ENCODE measurements at regions of chr6 and their contacts with region 1.

Region 1: DNA sequence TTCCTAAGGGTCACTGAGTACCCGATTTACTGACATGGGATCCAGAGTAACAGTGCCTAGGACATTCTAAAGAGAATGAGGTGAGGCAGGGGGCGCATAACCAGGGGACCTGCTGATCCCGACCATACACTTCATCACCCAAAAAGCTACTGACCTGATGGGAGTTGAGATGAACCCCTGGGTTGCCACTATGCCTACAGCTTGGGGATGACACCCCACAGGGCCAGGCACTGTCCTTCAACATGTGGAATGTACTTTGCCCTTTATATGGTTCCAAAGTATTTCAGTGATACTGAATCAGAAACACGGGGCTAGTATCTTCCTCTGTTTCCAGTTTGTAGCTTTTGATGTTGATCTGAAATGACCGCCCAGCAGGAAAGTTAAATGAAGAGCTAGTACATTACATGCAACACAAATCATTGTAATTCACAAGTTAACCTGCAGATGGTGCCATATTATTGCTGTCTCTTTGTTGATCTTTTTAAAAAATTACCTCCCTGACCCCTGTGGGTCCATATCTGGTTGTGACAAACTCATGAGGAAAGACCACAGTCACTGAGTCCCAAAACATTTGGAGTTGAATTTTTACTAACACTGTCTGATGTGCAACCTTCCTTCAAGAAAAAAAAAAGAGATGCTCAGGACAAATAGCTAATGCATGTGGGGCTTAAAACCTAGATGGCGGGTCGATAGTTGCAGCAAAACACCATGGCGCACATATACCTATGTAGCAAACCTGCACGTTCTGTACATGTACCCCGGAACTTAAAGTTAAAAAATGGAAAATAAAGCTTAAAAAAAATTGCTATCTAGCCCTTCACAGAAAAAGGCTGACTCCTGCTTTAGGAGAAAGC is 42.7 kb upstream of the GCNT2 start:
- DNase-seq: peak; percentile 39 to 54
- ATAC-seq: peak; percentile 50 to 76
- H3K4me3 ChIP-seq: no peak overlapping the region
- H3K27ac ChIP-seq: peak overlapping the region in 1 of 2 experiments; percentile 59; a peak in 1 of 6 replicates
- H3K4me1 ChIP-seq: peaks cover 10% of the 10 kb centered on the region; the same call in 2 of the 3 replicates
- CTCF ChIP-seq: peak; percentile 66
- EP300 ChIP-seq: no peak
- POLR2A ChIP-seq: no peak
- RAD21 ChIP-seq: peak; percentile 69 to 75

Region 2: GRCh38 chr6:10465629-10466504 is 12.5 kb before region 1 on chr6:
- CTCF ChIA-PET with region 1: interaction called, 22 read pairs
- POLR2A ChIA-PET with region 1: no interaction called
- DNase-seq: peak; percentile 33 to 72
- ATAC-seq: peak; percentile 73 to 85; a peak in 5 of 6 replicates
- H3K4me3 ChIP-seq: no peak overlapping the region
- H3K27ac ChIP-seq: peak overlapping the region; percentile 70 to 81
- H3K4me1 ChIP-seq: peaks cover 27% of the 10 kb centered on the region
- CTCF ChIP-seq: peak; percentile 63
- EP300 ChIP-seq: no peak
- POLR2A ChIP-seq: no peak; the same call in 1 of the 2 replicates
- RAD21 ChIP-seq: peak; percentile 57 to 67

Region 3: GRCh38 chr6:10491463-10491862 is 13.0 kb after region 1 on chr6:
- CTCF ChIA-PET with region 1: interaction called, 17 read pairs
- POLR2A ChIA-PET with region 1: no interaction called
- DNase-seq: no peak
- ATAC-seq: no peak
- H3K4me3 ChIP-seq: no peak overlapping the region
- H3K27ac ChIP-seq: no peak overlapping the region
- H3K4me1 ChIP-seq: no peaks in the 10 kb centered on the region
- CTCF ChIP-seq: no peak
- EP300 ChIP-seq: no peak
- POLR2A ChIP-seq: no peak
- RAD21 ChIP-seq: no peak

Region 4: GRCh38 chr6:10510592-10511367 is 32.4 kb after region 1 on chr6:
- CTCF ChIA-PET with region 1: interaction called, 14 read pairs
- POLR2A ChIA-PET with region 1: no interaction called
- DNase-seq: peak; percentile 62 to 63
- ATAC-seq: peak; percentile 98 to 99
- H3K4me3 ChIP-seq: peak overlapping the region; percentile 22; the same call in 1 of the 3 replicates
- H3K27ac ChIP-seq: peak overlapping the region; percentile 51 to 74
- H3K4me1 ChIP-seq: peaks cover 27% of the 10 kb centered on the region
- CTCF ChIP-seq: peak; percentile 70
- EP300 ChIP-seq: no peak
- POLR2A ChIP-seq: no peak
- RAD21 ChIP-seq: peak; percentile 84 to 89

Region 5: GRCh38 chr6:10800829-10801535 is 322.6 kb after region 1 on chr6:
- CTCF ChIA-PET with region 1: interaction called, 27 read pairs
- POLR2A ChIA-PET with region 1: no interaction called
- DNase-seq: peak; percentile 56 to 60
- ATAC-seq: peak; percentile 99
- H3K4me3 ChIP-seq: no peak overlapping the region
- H3K27ac ChIP-seq: peak overlapping the region in 1 of 2 experiments; percentile 55; a peak in 2 of 6 replicates
- H3K4me1 ChIP-seq: peaks cover 7% of the 10 kb centered on the region; the same call in 2 of the 3 replicates
- CTCF ChIP-seq: peak; percentile 90
- EP300 ChIP-seq: no peak
- POLR2A ChIP-seq: no peak
- RAD21 ChIP-seq: peak; percentile 82 to 88

Region 6: DNA sequence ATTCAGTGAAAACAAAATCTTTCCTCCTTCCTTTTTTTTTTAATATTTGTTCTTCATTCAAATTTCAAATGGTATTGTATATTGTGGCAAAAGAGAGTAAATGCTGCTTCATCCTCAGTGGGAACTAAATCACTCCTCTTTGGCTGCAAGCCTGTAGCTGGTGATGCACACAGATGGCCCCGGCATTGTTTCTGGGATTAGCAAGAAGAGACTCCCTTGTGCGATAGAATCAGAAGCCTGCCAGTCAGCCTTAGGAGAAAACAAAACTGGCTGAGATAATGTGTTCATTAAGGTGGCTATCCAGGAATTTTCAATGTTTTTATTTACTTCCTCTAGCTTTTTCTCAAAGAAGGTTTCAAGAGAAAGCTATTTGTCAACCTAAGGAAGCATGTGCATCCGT is 586.4 kb after region 1 on chr6:
- CTCF ChIA-PET with region 1: interaction called, 10 read pairs
- POLR2A ChIA-PET with region 1: no interaction called
- DNase-seq: no peak
- ATAC-seq: no peak
- H3K4me3 ChIP-seq: no peak overlapping the region
- H3K27ac ChIP-seq: no peak overlapping the region
- H3K4me1 ChIP-seq: peaks cover 3% of the 10 kb centered on the region; the same call in 1 of the 3 replicates
- CTCF ChIP-seq: no peak
- EP300 ChIP-seq: no peak
- POLR2A ChIP-seq: no peak
- RAD21 ChIP-seq: no peak

Measured in A549 (cell line).